Lower leg skin (tissue), 4 donors: ENCODE measurements at regions of chr12 and their contacts with region 1.

Region 1: GRCh38 chr12:131129818-131130231 is 176.1 kb downstream of the ADGRD1 start:
- DNase-seq: peak in 1 of 2 donors; percentile 58
- H3K4me3 ChIP-seq: no peak overlapping the region
- CTCF ChIP-seq: no peak
- POLR2A ChIP-seq: no peak

Region 2: DNA sequence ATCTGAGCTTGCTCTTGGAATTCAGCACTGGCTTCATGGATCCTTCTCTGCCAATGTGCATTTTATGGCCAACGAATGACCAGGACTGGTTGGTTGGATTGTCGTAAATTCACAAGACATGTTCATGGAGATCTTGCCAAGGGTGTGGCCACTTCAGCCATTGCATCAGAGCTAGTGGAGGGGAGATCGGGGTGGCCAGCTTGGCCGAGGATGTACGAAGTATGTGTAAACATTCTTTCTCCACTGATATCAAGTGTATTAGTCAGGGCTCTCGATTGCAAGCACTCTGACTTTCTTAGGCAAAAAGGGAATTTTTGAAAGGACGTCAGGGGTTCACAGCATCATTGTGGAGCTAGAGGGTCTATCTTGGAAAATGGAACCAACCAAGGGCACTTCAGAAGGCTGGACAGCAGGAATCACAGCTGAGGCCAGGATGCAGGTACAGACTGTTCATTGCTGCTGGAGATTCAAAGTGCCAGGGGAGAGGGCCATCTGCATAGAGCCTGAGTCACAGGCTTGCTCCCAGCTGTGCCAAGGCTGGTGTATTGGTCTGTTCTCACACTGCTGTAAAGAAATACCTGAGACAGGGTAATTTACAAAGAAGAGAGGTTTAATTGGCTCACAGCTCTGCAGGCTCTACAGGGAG is 209.0 kb before region 1 on chr12:
- intact Hi-C with region 1: loop called (anchors 10 kb)
- DNase-seq: peak; percentile 84 to 95
- H3K4me3 ChIP-seq: no peak overlapping the region
- CTCF ChIP-seq: no peak
- POLR2A ChIP-seq: no peak

Region 3: GRCh38 chr12:131260954-131261353 is 131.1 kb after region 1 on chr12:
- intact Hi-C with region 1: no loop called
- DNase-seq: no peak
- H3K4me3 ChIP-seq: no peak overlapping the region
- CTCF ChIP-seq: no peak
- POLR2A ChIP-seq: no peak